T-cell (primary cell): ENCODE measurements at regions of chrX and their contacts with region 1.

Region 1: DNA sequence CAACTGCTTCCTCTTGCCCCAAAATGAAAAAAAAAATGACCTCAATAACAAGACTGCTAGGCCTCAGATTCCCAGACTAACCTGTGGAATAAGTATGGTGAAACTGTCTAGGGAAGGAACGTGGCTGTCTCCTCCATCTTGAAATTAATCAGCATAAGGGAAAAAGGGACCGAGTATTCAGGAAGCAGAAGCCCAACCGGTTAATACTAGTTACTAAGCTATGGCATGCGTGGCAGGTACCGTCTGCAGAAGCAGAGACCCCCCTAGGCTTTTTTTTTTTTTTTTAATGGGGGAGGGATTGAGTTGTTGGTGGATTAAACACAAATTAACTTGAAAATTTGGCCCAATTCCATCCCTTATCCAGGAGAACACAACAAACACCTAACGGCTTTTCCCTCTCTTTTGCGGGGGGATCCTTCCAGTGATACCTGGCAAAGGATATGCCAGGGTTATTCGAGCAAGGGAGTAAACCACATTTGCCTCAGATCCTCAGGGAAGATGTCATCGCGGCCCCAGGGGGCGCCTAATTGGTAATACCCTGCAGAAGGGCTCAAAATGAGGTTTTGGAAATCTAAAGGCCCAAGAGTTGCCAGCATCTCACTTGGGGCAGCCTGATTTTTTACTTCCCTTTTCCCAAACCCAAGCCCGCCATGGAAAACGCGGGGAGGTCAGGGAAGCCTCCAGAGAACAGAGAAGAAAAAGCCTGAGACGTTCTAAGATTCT is 893 bp downstream of the RLIM start:
- DNase-seq: peak in 4 of 35 experiments; percentile 1 to 27 (median 2)
- ATAC-seq: no peak
- H3K4me3 ChIP-seq: peak overlapping the region; percentile 68 to 69
- H3K4me3 Mint-ChIP-seq: peak overlapping the region; percentile 97 to 99 (median 99)
- H3K27ac ChIP-seq: peak overlapping the region; percentile 95
- H3K27ac Mint-ChIP-seq: peak overlapping the region; percentile 99
- H3K4me1 ChIP-seq: peaks cover 2 to 4% of the 10 kb centered on the region in 2 experiments
- H3K4me1 Mint-ChIP-seq: peaks cover 22 to 37% (median 30%) of the 10 kb centered on the region in 3 donors
- H3K27me3 ChIP-seq: no peaks in the 10 kb centered on the region
- H3K27me3 Mint-ChIP-seq: peaks cover 0 to 3% of the 10 kb centered on the region in 2 donors

Region 2: DNA sequence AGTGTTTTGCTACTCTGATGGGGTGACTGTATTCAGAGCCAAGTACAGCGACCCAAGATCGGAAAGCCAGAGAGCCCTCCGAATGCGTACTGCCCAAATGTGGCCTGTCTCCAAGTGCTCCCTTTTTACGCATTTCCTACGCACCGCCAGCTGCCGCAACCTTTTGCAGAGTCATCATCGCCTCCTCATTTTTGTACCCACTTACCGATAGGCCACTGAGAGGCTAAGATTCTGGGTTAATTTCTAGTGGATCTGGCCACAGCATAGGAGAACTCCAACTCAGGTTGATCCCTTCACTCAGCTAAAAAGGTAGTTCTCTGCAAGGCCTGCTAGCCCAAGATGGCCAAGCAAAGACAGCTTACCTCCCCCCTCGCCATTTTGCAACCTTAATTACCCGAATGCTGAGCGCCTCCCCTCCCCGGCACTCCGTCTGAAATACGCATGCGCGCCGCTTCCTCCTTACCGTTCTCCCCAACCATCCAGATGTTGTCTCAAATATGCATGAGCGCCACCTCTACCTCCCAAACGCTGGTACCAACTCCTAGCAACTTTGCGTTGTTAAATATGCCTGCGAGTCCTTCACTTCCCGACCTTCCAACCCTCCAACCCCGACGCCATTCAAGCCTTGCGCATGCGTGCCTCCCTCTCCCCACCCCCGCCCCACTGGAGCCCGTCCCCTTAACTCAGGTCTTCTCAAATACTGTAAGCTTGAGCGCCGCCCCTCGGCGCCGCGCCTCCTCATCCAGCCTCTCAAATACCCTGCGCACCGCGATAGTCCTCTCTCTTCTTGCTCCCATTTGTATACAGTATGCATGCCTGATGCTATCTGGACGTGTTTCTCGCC is 321.3 kb before region 1 on chrX:
- CTCF ChIA-PET with region 1: interaction called in 1 of 2 experiments, 11 read pairs
- POLR2A ChIA-PET with region 1: interaction called in 1 of 2 experiments, 5 read pairs
- DNase-seq: peak; percentile 59 to 91 (median 79)
- ATAC-seq: peak; percentile 88 to 91 (median 90)
- H3K4me3 ChIP-seq: peak overlapping the region; percentile 83 to 87
- H3K4me3 Mint-ChIP-seq: peak overlapping the region; percentile 88 to 97 (median 94)
- H3K27ac ChIP-seq: peak overlapping the region; percentile 88
- H3K27ac Mint-ChIP-seq: peak overlapping the region; percentile 98 to 99
- H3K4me1 ChIP-seq: peaks cover 4 to 12% of the 10 kb centered on the region in 2 experiments
- H3K4me1 Mint-ChIP-seq: peaks cover 25 to 42% (median 26%) of the 10 kb centered on the region in 3 donors
- H3K27me3 ChIP-seq: no peaks in the 10 kb centered on the region
- H3K27me3 Mint-ChIP-seq: peaks cover 0 to 8% of the 10 kb centered on the region in 2 donors

Region 3: DNA sequence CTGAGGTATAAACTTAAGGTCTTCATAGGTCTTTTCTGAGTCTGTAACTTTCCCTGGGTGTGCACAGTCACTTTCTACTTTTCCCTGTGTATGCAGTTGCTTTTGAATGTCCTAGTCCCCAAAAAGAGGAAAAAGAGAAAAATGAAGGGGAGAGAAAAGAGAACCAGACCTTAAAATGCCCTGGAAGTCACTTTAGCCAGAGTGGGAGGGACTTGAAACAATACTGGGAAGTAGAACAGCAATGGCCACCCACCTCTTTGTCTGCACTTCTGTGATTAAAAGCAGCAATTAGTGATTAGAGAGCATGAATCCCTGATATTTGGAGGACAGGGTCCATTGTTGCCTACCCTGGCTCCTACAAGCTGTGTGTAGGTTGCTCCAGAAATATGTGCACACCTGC is 273.5 kb before region 1 on chrX:
- CTCF ChIA-PET with region 1: no interaction called
- POLR2A ChIA-PET with region 1: no interaction called
- DNase-seq: no peak
- ATAC-seq: no peak
- H3K4me3 ChIP-seq: no peak overlapping the region
- H3K4me3 Mint-ChIP-seq: no peak overlapping the region
- H3K27ac ChIP-seq: no peak overlapping the region
- H3K27ac Mint-ChIP-seq: no peak overlapping the region
- H3K4me1 ChIP-seq: no peaks in the 10 kb centered on the region
- H3K4me1 Mint-ChIP-seq: peaks cover 1 to 6% (median 2%) of the 10 kb centered on the region in 3 donors
- H3K27me3 ChIP-seq: no peaks in the 10 kb centered on the region
- H3K27me3 Mint-ChIP-seq: peaks cover 9 to 32% of the 10 kb centered on the region in 2 donors